WTC11 (cell line): ENCODE measurements at regions of chr22 and their contacts with region 1.

Region 1: GRCh38 chr22:42444077-42444904 is 12.1 kb upstream of the NFAM1 start:
- DNase-seq: peak; percentile 95
- ATAC-seq: peak; percentile 81
- H3K4me3 Mint-ChIP-seq: peak overlapping the region; percentile 63
- H3K27ac Mint-ChIP-seq: no peak overlapping the region
- H3K4me1 Mint-ChIP-seq: peaks cover 41% of the 10 kb centered on the region
- H3K27me3 Mint-ChIP-seq: peaks cover 20% of the 10 kb centered on the region
- CTCF ChIP-seq: peak; percentile 74

Region 2: GRCh38 chr22:42169055-42169469 is 275.2 kb before region 1 on chr22:
- CTCF ChIA-PET with region 1: interaction called, 44 read pairs
- POLR2A ChIA-PET with region 1: interaction called, 4 read pairs
- DNase-seq: peak; percentile 90
- ATAC-seq: peak; percentile 92
- H3K4me3 Mint-ChIP-seq: no peak overlapping the region
- H3K27ac Mint-ChIP-seq: 0 out of 2 replicates have a peak overlapping the region, but pooled peaks have one; percentile 47
- H3K4me1 Mint-ChIP-seq: peaks cover 35% of the 10 kb centered on the region
- H3K27me3 Mint-ChIP-seq: no peaks in the 10 kb centered on the region
- CTCF ChIP-seq: peak; percentile 85

Region 3: GRCh38 chr22:42300259-42301076 is 143.8 kb before region 1 on chr22:
- CTCF ChIA-PET with region 1: interaction called, 22 read pairs
- POLR2A ChIA-PET with region 1: interaction called, 3 read pairs
- DNase-seq: no peak
- ATAC-seq: peak; percentile 49
- H3K4me3 Mint-ChIP-seq: peak overlapping the region; percentile 56
- H3K27ac Mint-ChIP-seq: peak overlapping the region; percentile 68; the same call in 1 of the 2 replicates
- H3K4me1 Mint-ChIP-seq: peaks cover 77% of the 10 kb centered on the region
- H3K27me3 Mint-ChIP-seq: peaks cover 23% of the 10 kb centered on the region
- CTCF ChIP-seq: no peak

Region 4: DNA sequence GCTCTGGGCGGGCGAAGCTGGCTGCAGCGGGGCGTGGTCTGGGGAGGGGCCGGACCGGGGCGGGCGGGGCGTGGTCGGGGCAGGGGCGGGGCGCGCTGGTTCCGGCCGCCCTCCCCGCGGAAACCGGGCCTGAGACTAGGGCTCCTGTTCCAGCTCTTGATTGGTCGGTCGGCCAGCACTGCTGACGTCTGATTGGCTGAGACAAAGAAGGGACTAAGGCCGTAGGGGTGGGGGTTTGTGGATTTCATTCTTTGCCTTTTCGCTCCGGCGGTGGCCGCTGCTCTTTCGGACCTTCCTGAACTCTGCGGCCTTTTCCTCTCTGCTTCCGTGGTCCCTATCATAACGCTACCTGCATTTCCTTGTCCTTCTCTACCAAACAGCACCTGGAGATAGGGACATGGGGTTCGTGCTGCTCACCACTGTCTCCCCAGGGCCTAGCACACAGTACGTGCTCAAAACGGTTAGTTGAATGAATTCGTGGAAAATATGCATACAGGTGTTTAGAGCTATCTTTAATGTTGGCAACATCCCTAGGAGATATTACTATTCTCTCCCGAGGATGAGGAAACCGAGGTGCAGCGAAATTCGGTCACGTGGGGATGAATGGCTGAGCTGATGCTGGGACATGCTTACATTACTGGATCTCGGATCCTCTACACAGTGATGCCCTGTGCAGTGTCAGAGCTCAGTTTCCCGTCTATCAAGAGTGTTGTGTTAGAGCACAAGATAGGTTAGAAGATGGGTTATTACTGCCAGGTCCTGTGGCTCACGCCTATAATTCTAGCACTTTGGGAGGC is 74.8 kb before region 1 on chr22:
- CTCF ChIA-PET with region 1: interaction called, 29 read pairs
- POLR2A ChIA-PET with region 1: interaction called, 3 read pairs
- DNase-seq: peak; percentile 92
- ATAC-seq: peak; percentile 86
- H3K4me3 Mint-ChIP-seq: peak overlapping the region; percentile 86
- H3K27ac Mint-ChIP-seq: peak overlapping the region; percentile 95
- H3K4me1 Mint-ChIP-seq: peaks cover 58% of the 10 kb centered on the region
- H3K27me3 Mint-ChIP-seq: no peaks in the 10 kb centered on the region; the same call in 1 of the 2 replicates
- CTCF ChIP-seq: no peak

Region 5: GRCh38 chr22:42432020-42432596 is 12.2 kb before region 1 on chr22 and contains the start of gene NFAM1:
- CTCF ChIA-PET with region 1: interaction called, 18 read pairs
- POLR2A ChIA-PET with region 1: no interaction called
- DNase-seq: no peak
- ATAC-seq: no peak
- H3K4me3 Mint-ChIP-seq: no peak within 1 kb of the TSS
- H3K27ac Mint-ChIP-seq: peak within 1 kb of the TSS; percentile 46; the same call in 1 of the 2 replicates
- H3K4me1 Mint-ChIP-seq: peaks cover 26% of the 10 kb centered on the region
- H3K27me3 Mint-ChIP-seq: peaks cover 14% of the 10 kb centered on the region
- CTCF ChIP-seq: no peak
- total RNA-seq, gene NFAM1: 0.92 to 1.6 TPM (median 1.2 TPM) in 3 replicates

Region 6: GRCh38 chr22:42490243-42490832 is 46.0 kb after region 1 on chr22:
- CTCF ChIA-PET with region 1: interaction called, 11 read pairs
- POLR2A ChIA-PET with region 1: no interaction called
- DNase-seq: no peak
- ATAC-seq: peak; percentile 24; the same call in 1 of the 2 replicates
- H3K4me3 Mint-ChIP-seq: no peak overlapping the region
- H3K27ac Mint-ChIP-seq: 0 out of 2 replicates have a peak overlapping the region, but pooled peaks have one; percentile 27
- H3K4me1 Mint-ChIP-seq: peaks cover 23% of the 10 kb centered on the region
- H3K27me3 Mint-ChIP-seq: no peaks in the 10 kb centered on the region
- CTCF ChIP-seq: no peak